Posterior vena cava (tissue), 2 donors: ENCODE measurements at regions of chr11 and their contacts with region 1.

Region 1: GRCh38 chr11:2305140-2305840 is 3.5 kb downstream of the TSPAN32 start:
- DNase-seq: peak; percentile 95

Region 2: GRCh38 chr11:2196970-2197770 is 108.1 kb before region 1 on chr11:
- intact Hi-C with region 1: loop called in 1 of 2 experiments (anchors 10 kb)
- DNase-seq: peak; percentile 92

Region 3: GRCh38 chr11:2420502-2421225 is 115.4 kb after region 1 on chr11:
- intact Hi-C with region 1: loop called (anchors 2 kb)
- DNase-seq: peak; percentile 93

Region 4: DNA sequence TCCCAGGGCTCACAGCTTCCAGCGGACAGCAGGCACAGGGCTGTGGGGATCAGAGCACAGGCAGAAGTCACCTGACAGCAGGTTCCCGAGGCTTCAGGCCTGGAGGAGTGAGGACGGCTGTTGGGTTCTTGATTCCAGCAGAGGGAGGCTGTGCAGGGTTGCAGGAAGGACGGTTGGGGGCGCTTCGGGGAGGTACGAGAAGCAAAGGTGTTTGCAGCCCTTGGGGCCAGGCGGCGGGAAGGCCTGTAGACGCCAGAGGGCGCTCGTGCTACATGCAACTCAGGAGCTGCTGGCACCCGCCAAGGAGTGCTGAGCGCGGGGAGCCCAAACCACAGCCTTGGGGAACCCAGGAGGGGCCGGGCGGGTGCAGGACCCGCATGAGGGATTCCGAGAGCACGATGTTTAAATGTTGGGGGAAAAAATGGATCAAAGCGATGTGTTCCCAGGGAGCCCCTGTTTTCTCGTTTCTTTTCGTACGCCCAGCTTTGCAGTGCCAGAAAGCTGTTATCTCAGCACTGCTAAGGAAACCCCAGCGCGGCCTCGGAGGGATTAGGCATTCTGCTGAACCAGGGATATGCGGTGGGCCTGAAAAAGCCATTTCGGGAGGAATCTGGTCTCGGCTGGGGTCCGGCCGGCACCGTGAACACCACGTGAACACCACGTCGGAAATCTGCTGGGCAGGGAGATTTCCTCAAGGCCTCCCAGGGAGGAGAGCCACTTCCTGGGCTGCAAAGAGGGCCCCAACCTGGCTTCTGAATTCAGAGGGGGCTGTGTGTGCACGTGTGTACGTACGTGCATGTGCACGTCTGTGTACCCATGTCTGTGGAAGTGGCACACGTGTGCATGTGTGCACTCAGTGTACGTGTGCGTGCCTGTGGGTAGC is 227.7 kb after region 1 on chr11:
- intact Hi-C with region 1: loop called in 1 of 2 experiments (anchors 1 kb)
- DNase-seq: peak; percentile 97

Region 5: GRCh38 chr11:2885676-2886081 is 580.4 kb after region 1 on chr11 and contains the start of gene CDKN1C:
- intact Hi-C with region 1: loop called (anchors 10 kb)
- DNase-seq: peak; percentile 95
- total RNA-seq, gene CDKN1C: 23.6 to 58.8 TPM

Region 6: DNA sequence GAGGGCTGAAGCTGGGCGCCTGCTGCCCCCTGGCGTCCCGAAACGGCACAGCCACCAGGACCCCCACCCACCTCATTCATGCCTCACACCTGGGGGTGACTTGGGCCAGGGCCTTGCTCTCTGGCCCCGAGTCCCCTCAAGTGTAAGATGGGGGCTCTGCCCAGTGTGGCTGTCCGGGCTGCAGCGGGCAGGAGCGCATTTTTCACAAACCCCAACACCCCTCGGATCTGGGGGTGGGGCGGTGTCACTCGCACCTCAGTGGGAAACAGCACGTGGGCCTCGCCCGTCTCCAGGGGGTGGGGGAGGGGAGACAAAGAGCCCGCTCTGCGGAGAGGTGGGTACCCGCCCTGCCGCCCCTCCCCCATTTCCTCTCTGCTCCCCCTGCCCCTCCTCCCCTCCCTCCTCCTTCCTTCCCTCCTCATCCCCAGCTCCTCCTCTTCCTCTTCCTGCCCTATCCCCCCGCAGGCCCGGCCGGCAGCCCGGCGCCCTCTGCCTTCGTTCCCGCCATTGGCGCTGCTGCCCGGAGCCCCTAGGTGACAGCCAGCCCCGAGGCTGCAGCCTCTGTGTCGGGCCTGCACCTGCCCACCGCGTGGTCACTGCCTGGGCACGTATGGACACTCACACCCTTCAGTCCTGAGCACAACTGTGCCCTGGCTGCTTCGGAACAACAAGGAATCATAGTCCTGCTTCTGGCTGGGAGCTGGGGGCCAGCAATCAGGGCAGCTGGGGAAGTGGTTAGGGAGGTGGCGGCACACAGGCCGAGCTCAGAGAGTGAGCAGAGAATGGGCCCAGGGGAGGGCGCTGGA is 587.1 kb after region 1 on chr11:
- intact Hi-C with region 1: loop called (anchors 10 kb)
- DNase-seq: no peak